GM10248 (cell line): ENCODE measurements at regions of chr16 and their contacts with region 1.

Region 1: DNA sequence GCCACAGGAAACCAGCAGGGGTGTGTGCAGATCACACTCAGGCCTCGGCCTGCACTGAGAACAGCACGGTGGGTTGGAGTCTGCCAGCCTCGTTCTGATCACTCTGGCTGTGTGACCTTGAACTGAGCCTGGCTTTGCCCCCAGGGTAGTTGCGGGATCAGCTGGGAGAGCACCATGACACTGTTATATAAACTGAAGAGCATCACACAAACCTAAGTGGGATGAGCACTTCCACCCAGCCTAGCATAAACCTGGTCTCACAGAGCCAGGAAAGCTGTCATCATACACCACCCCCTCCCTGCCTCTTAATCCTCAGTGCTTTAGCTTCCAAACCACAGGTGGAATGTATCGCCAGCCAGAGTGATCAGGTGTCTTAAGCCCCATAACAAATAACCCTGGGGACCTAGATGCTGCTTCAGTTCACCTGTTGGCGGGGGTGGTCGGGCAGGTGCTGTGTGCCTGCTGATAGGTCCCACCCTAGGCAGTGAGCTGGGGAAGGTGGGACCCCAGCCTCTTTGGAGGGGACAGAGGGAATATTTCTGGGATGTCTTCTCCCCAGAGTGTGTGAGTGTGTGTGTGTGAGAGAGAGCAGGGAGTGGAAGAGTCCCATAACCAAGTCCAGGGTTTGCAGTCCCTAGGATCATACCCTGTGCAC is 28.5 kb upstream of the NDRG4 start:
- DNase-seq: no peak
- CTCF ChIP-seq: no peak

Region 2: GRCh38 chr16:58487566-58488351 is 16.3 kb after region 1 on chr16:
- CTCF ChIA-PET with region 1: interaction called, 15 read pairs
- POLR2A ChIA-PET with region 1: no interaction called
- DNase-seq: peak; percentile 90
- CTCF ChIP-seq: peak; percentile 94